Caco-2 (cell line): ENCODE measurements at regions of chr17 and their contacts with region 1.

Region 1: GRCh38 chr17:20992987-20993862 is 49.6 kb downstream of the USP22 start:
- DNase-seq: peak; percentile 78 to 87
- H3K4me3 ChIP-seq: no peak overlapping the region
- H3K4me3 Mint-ChIP-seq: no peak overlapping the region
- H3K27ac Mint-ChIP-seq: peak overlapping the region; percentile 77
- H3K4me1 ChIP-seq: no peaks in the 10 kb centered on the region
- H3K4me1 Mint-ChIP-seq: no peaks in the 10 kb centered on the region
- H3K27me3 ChIP-seq: no peaks in the 10 kb centered on the region
- H3K27me3 Mint-ChIP-seq: no peaks in the 10 kb centered on the region
- CTCF ChIP-seq: peak; percentile 86 to 97

Region 2: GRCh38 chr17:20908373-20909273 is 84.6 kb before region 1 on chr17:
- CTCF ChIA-PET with region 1: interaction called, 20 read pairs
- POLR2A ChIA-PET with region 1: interaction called, 4 read pairs
- intact Hi-C with region 1: loop called (anchors 1 kb)
- DNase-seq: peak; percentile 96 to 97
- H3K4me3 ChIP-seq: peak overlapping the region; percentile 32
- H3K4me3 Mint-ChIP-seq: peak overlapping the region; percentile 73
- H3K27ac Mint-ChIP-seq: peak overlapping the region; percentile 76
- H3K4me1 ChIP-seq: peaks cover 12% of the 10 kb centered on the region; the same call in 1 of the 2 replicates
- H3K4me1 Mint-ChIP-seq: peaks cover 12% of the 10 kb centered on the region
- H3K27me3 ChIP-seq: no peaks in the 10 kb centered on the region
- H3K27me3 Mint-ChIP-seq: peaks cover 6% of the 10 kb centered on the region
- CTCF ChIP-seq: peak; percentile 42 to 86

Region 3: DNA sequence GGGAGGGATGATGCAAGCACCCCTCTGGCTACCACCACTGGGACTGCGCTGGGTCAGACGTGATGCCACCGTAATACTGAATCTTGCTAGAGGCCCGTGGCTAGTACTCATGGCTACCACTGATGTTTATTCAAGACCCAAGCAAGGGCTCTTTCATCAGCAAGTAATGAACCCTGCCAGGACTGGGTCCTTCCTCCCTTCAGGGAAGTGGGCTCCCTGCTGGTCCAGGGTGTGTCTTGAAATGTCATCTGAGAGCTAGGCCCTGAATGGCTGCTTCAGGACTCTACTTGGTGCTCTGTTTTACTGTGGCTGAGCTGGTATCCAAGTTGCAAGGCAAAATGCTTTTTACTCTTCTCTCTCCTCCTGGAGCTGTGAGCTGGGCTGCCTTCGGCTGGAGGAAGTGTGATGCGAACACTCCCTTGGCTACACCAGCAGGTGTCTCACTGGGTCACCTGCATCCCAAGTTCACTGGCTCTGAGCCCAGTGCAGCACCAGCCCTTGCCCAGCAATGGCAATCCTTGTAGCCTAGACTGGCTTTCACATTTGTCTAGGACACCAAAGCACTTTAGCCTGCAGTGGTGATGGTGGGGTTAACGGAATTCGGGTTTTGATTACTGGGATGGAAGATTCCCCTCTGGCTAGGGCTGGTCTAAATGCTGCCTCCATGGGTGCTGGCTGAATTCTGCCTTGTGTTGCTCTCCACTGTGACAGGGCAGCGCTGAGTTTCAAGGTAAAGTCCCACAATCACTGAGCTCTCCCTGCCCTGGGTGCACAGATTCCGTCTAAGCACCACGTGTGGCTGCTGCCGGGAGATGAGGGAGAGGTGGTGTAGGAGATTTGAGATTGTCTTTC is 49.0 kb before region 1 on chr17:
- CTCF ChIA-PET with region 1: interaction called, 19 read pairs
- POLR2A ChIA-PET with region 1: no interaction called
- intact Hi-C with region 1: loop called (anchors 1 kb)
- DNase-seq: peak; percentile 63 to 74
- H3K4me3 ChIP-seq: no peak overlapping the region
- H3K4me3 Mint-ChIP-seq: no peak overlapping the region
- H3K27ac Mint-ChIP-seq: no peak overlapping the region
- H3K4me1 ChIP-seq: no peaks in the 10 kb centered on the region
- H3K4me1 Mint-ChIP-seq: peaks cover 6% of the 10 kb centered on the region
- H3K27me3 ChIP-seq: no peaks in the 10 kb centered on the region
- H3K27me3 Mint-ChIP-seq: peaks cover 3% of the 10 kb centered on the region
- CTCF ChIP-seq: peak; percentile 73 to 89